Lower lobe of right lung (tissue), 2 donors: ENCODE measurements at regions of chr13 and their contacts with region 1.

Region 1: DNA sequence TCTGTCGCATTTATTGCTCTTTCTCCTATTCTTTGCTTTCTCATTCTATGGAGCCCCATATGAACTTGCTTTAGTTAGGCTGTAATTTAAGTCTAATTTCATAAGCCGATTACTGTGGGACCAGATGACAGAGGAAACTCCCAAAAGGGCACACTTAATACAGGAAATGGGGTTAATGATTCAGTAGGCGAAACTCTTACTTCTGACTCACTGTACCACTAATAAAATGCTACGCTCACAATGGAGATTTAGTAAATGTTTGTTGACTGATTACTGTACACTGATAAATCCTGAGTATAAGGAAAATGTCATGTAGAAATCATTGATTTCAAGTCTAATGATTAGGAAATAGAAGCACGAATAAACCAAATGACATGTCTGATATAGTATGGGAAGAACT is 276.4 kb downstream of the KLF5 start:
- DNase-seq: no peak
- ATAC-seq: no peak
- H3K4me3 ChIP-seq: no peak overlapping the region
- H3K27ac ChIP-seq: no peak overlapping the region
- H3K4me1 ChIP-seq: no peaks in the 10 kb centered on the region
- H3K27me3 ChIP-seq: no peaks in the 10 kb centered on the region
- CTCF ChIP-seq: no peak

Region 2: DNA sequence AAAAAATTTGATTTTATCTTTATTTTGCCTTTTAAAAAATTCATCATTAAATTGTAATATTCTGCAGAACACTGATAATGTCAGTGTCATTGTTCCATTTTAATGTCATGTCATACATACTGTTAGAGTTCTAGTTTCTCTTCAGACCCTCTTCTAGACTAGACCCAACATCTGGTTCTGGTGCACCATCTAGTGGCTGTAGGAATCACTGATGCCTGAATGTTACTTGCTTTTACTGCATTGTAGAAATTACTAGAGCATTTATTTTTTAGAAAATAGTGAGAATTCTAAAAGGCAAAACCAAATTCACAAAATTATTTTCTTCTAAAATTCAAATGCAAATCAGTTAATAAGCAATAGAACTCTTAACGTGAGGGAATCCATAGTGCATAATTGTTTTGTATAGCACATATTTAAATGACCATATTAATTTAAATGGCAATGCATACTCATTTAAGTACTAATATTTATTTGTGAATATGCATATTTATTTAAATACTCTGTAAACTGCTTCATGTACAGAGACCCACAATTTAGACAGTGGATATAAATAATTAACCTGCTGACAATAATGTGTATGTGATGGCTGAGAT is 373.3 kb after region 1 on chr13:
- intact Hi-C with region 1: loop called (anchors 10 kb)
- DNase-seq: no peak
- ATAC-seq: peak; percentile 72 to 77
- H3K4me3 ChIP-seq: no peak overlapping the region
- H3K27ac ChIP-seq: no peak overlapping the region
- H3K4me1 ChIP-seq: no peaks in the 10 kb centered on the region
- H3K27me3 ChIP-seq: no peaks in the 10 kb centered on the region
- CTCF ChIP-seq: peak; percentile 72